Activated B cell treated with CpG ODN at 0.5 μM for 24 hours (primary cell): ENCODE measurements at regions of chr2 and their contacts with region 1.

Region 1: GRCh38 chr2:216666461-216667233 is 28.7 kb downstream of the IGFBP5 start:
- DNase-seq: peak; percentile 58
- ATAC-seq: peak; percentile 91
- H3K4me3 Mint-ChIP-seq: no peak overlapping the region
- H3K27ac Mint-ChIP-seq: no peak overlapping the region
- H3K4me1 Mint-ChIP-seq: no peaks in the 10 kb centered on the region
- H3K27me3 Mint-ChIP-seq: peaks cover 38% of the 10 kb centered on the region
- CTCF ChIP-seq: no peak

Region 2: DNA sequence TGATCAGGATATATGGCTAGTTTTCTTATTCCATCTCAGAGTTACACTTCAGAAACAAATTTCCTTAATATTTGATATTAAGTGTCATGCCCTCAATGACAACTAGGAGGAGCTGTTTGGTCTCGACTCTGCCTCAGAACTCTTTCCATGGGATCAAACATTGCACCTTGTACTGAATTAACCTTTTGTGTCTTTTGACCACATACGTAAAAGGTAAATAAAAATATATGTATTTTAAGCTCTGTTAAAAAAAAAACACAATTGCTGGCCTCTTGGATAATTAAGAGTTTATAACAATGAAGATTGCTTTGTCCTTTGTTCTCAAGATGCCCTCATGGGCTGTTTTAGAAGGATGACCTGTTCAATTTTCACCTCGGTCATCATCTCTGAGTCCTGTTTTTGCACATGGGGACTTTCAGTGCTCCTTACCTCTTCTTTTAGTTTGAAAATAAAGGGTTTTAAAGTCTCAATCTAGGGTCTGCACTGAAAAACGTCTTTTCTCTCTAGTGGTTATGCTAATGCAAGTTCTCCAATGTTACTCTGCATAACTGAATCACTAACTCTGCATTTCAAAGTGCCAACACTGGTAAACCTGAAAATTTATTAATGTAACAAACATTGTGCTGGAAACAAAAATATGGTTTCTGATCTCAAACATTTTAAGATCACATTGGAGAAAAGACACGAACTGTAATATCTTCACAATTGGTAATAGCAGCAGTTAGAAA is 1212.0 kb before region 1 on chr2:
- CTCF ChIA-PET with region 1: no interaction called
- POLR2A ChIA-PET with region 1: no interaction called
- intact Hi-C with region 1: loop called (anchors 10 kb)
- DNase-seq: no peak
- ATAC-seq: no peak
- H3K4me3 Mint-ChIP-seq: no peak overlapping the region
- H3K27ac Mint-ChIP-seq: no peak overlapping the region
- H3K4me1 Mint-ChIP-seq: no peaks in the 10 kb centered on the region
- H3K27me3 Mint-ChIP-seq: peaks cover 17% of the 10 kb centered on the region
- CTCF ChIP-seq: peak; percentile 71

Region 3: GRCh38 chr2:215728504-215729087 is 938.1 kb before region 1 on chr2:
- CTCF ChIA-PET with region 1: no interaction called
- POLR2A ChIA-PET with region 1: no interaction called
- intact Hi-C with region 1: no loop called
- DNase-seq: no peak
- ATAC-seq: no peak
- H3K4me3 Mint-ChIP-seq: no peak overlapping the region
- H3K27ac Mint-ChIP-seq: no peak overlapping the region
- H3K4me1 Mint-ChIP-seq: peaks cover 6% of the 10 kb centered on the region
- H3K27me3 Mint-ChIP-seq: no peaks in the 10 kb centered on the region
- CTCF ChIP-seq: no peak

Region 4: GRCh38 chr2:215994901-215995300 is 671.7 kb before region 1 on chr2:
- CTCF ChIA-PET with region 1: no interaction called
- POLR2A ChIA-PET with region 1: no interaction called
- intact Hi-C with region 1: no loop called
- DNase-seq: no peak
- ATAC-seq: no peak
- H3K4me3 Mint-ChIP-seq: no peak overlapping the region
- H3K27ac Mint-ChIP-seq: no peak overlapping the region
- H3K4me1 Mint-ChIP-seq: no peaks in the 10 kb centered on the region
- H3K27me3 Mint-ChIP-seq: no peaks in the 10 kb centered on the region
- CTCF ChIP-seq: no peak

Region 5: DNA sequence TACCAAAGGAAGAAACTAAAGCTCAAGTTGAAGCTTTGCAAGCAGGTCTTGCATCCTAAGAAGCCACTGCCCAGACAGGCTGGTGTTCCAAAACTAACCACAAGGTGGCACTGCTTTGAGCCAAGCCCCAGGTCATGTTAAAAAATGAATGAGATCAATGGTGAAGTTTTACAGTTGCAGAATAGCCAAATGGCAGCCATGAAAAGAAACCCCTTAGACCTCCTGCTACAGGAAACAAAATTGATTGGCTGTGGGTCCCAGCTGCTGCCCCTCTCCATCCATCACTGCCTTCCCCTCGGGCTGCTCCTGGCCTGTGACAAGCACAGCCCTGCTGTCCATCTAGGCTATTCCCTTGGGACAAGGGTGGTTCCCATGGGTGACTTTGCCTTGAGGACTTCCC is 632.6 kb before region 1 on chr2:
- CTCF ChIA-PET with region 1: interaction called, 35 read pairs
- POLR2A ChIA-PET with region 1: no interaction called
- intact Hi-C with region 1: loop called (anchors 1 kb)
- DNase-seq: peak; percentile 53
- ATAC-seq: peak; percentile 93
- H3K4me3 Mint-ChIP-seq: no peak overlapping the region
- H3K27ac Mint-ChIP-seq: no peak overlapping the region
- H3K4me1 Mint-ChIP-seq: peaks cover 8% of the 10 kb centered on the region
- H3K27me3 Mint-ChIP-seq: no peaks in the 10 kb centered on the region
- CTCF ChIP-seq: peak; percentile 52

Region 6: DNA sequence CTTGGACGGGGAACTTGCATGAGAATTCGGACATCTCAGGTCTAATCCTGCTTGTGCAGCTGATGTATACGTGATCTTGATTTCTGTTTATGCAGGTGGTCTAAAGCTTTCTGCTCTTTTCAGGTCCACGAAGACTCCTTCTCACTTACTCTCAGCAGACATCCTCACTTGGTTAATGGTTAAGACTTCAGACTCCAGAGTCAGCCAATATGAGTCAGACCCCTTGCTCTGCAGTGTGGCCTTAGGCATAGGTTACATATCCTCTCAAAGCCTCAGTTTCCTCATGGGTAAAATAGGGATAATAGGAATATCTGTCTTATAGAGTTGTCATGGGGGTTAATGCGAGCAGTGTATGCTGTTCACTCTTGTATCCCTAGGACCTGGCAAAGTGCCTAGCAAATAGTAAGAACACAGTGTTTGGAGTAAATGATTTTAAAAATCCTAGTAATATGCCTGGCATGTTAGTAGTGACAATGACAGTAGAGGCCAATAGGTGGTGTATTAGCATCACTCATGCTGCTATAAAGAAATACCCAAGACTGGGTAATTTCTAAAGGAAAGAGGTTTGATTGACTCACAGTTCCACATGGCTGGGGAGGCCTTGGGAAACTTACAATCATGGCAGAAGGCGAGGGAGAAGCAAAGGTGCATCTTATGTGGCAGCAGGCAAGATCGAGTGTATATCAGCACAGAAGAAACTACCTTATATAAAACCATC is 515.2 kb before region 1 on chr2:
- CTCF ChIA-PET with region 1: no interaction called
- POLR2A ChIA-PET with region 1: no interaction called
- intact Hi-C with region 1: loop called (anchors 5 kb)
- DNase-seq: no peak
- ATAC-seq: no peak
- H3K4me3 Mint-ChIP-seq: no peak overlapping the region
- H3K27ac Mint-ChIP-seq: no peak overlapping the region
- H3K4me1 Mint-ChIP-seq: no peaks in the 10 kb centered on the region
- H3K27me3 Mint-ChIP-seq: no peaks in the 10 kb centered on the region
- CTCF ChIP-seq: no peak

Region 7: GRCh38 chr2:216404010-216404618 is 262.5 kb before region 1 on chr2:
- CTCF ChIA-PET with region 1: interaction called, 3 read pairs
- POLR2A ChIA-PET with region 1: no interaction called
- intact Hi-C with region 1: loop called (anchors 2 kb)
- DNase-seq: no peak
- ATAC-seq: peak; percentile 88
- H3K4me3 Mint-ChIP-seq: no peak overlapping the region
- H3K27ac Mint-ChIP-seq: no peak overlapping the region
- H3K4me1 Mint-ChIP-seq: no peaks in the 10 kb centered on the region
- H3K27me3 Mint-ChIP-seq: peaks cover 11% of the 10 kb centered on the region
- CTCF ChIP-seq: no peak